Stomach (tissue), 19 donors: ENCODE measurements at regions of chr6 and their contacts with region 1.

Region 1: GRCh38 chr6:46626228-46626909 is 26.2 kb downstream of the CYP39A1 start:
- DNase-seq: peak in 1 of 2 donors; percentile 51
- H3K4me3 ChIP-seq: no peak overlapping the region
- H3K27ac ChIP-seq: peak overlapping the region in 3 of 5 donors; percentile 34 to 44 (median 39)
- H3K4me1 ChIP-seq: peaks cover 0 to 12% (median 3%) of the 10 kb centered on the region in 4 donors
- H3K27me3 ChIP-seq: no peaks in the 10 kb centered on the region
- CTCF ChIP-seq: peak in 5 of 7 experiments; percentile 49 to 63 (median 60)
- EP300 ChIP-seq: no peak
- POLR2A ChIP-seq: no peak

Region 2: DNA sequence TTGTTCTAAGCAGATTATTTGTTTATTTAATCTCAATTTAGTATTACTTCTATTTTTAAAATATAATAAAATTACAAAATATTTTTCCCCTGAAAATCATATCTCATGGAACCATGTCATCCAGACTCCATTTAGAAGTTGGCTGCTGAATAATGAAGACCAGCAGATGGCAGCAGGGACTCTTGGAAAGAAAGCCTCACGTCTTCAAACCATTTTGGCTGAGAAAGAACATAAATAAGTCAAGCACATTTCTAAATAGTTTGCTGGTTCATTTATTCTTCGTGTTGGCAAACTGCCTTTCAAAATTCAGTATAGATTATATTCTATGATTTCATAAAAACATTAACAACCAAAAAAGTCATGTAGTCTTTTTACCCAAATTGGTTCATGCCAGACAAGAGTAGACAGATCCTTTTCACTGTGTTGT is 206.8 kb before region 1 on chr6:
- intact Hi-C with region 1: loop called (anchors 10 kb)
- DNase-seq: peak; percentile 59 to 88
- H3K4me3 ChIP-seq: no peak overlapping the region
- H3K27ac ChIP-seq: no peak overlapping the region
- H3K4me1 ChIP-seq: peaks cover 0 to 23% (median 0%) of the 10 kb centered on the region in 4 donors
- H3K27me3 ChIP-seq: no peaks in the 10 kb centered on the region
- CTCF ChIP-seq: peak in 5 of 7 experiments; percentile 53 to 70 (median 63)
- EP300 ChIP-seq: no peak
- POLR2A ChIP-seq: no peak